HEK293 (cell line): ENCODE measurements at regions of chr1 and their contacts with region 1.

Region 1: GRCh38 chr1:156445789-156446263 is 54.7 kb downstream of the MEF2D start:
- H3K4me3 ChIP-seq: no peak overlapping the region
- H3K27ac ChIP-seq: no peak overlapping the region
- H3K4me1 ChIP-seq: no peaks in the 10 kb centered on the region
- CTCF ChIP-seq: peak; percentile 88

Region 2: DNA sequence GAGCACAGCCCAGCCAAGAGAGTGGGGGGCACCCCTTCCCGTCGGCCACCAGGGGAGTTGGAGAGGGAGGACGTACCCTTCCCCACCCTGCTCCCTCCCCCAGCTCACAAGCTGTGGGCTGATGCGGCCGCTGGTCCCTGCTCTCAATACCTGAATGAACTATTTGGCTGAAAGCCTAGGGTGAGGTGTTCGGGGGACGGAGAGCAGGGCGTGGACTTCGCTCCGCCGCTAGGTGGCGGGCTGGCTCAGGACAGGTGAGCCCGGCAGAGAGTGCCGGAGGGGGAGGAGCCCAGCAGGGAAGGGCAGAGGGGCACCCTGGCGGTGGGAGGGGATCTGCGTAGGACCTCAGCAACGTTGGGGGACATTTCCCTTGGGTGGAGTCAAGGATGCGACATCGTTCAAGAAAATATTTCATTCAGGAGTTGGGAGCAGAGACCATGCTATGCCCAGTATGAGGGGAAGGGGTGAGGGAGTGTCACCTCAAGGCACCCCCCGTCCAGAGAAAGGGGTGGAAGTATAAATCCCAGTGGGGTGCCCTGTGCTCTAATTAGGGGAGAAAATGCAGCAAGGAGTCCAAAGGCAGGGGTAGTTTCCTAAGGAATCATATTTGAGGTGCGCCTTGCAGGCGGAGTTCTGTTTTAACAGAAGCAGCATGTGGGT is 88.8 kb before region 1 on chr1:
- CTCF ChIA-PET with region 1: interaction called, 24 read pairs
- POLR2A ChIA-PET with region 1: no interaction called
- H3K4me3 ChIP-seq: no peak overlapping the region; the same call in 1 of the 2 replicates
- H3K27ac ChIP-seq: no peak overlapping the region
- H3K4me1 ChIP-seq: no peaks in the 10 kb centered on the region
- CTCF ChIP-seq: peak; percentile 98

Region 3: DNA sequence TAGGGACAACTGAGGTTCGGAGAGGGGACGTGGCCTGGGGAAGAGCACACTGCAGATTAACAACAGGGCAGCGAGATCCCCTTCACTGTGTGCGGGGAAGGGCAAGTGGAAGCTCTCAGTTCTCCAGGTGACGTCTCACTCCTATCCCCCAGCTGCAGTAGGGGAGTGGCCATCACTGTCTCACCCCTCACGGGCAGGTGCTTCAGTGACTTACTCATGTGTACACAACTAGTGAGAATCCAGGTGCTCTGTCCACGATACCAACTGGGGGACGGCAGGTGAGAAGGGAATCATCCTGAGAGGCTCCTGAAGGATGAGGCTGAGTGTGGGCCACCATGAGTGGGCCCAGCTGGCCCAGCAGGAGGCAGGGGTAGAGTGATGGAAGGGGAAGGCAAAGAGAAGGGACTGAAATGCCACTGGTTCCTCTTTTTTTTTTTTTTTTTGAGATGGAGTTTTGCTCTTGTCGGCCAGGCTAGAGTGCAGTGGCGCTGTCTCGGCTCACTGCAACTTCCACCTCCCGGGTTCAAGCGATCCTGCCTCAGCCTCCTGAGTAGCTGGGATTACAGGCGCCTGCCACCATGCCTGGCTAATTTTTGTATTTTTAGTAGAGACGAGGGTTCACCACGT is 50.9 kb before region 1 on chr1:
- CTCF ChIA-PET with region 1: interaction called, 439 read pairs
- POLR2A ChIA-PET with region 1: no interaction called
- H3K4me3 ChIP-seq: no peak overlapping the region
- H3K27ac ChIP-seq: no peak overlapping the region
- H3K4me1 ChIP-seq: no peaks in the 10 kb centered on the region
- CTCF ChIP-seq: no peak

Region 4: GRCh38 chr1:156429313-156430060 is 16.3 kb before region 1 on chr1:
- CTCF ChIA-PET with region 1: interaction called, 20 read pairs
- POLR2A ChIA-PET with region 1: no interaction called
- H3K4me3 ChIP-seq: no peak overlapping the region
- H3K27ac ChIP-seq: no peak overlapping the region
- H3K4me1 ChIP-seq: no peaks in the 10 kb centered on the region
- CTCF ChIP-seq: no peak

Region 5: GRCh38 chr1:156456622-156457465 is 11.0 kb after region 1 on chr1:
- CTCF ChIA-PET with region 1: interaction called, 40 read pairs
- POLR2A ChIA-PET with region 1: interaction called, 6 read pairs
- H3K4me3 ChIP-seq: peak overlapping the region; percentile 58
- H3K27ac ChIP-seq: peak overlapping the region; percentile 99
- H3K4me1 ChIP-seq: no peaks in the 10 kb centered on the region
- CTCF ChIP-seq: no peak

Region 6: GRCh38 chr1:156551866-156552265 is 106.0 kb after region 1 on chr1:
- CTCF ChIA-PET with region 1: no interaction called
- POLR2A ChIA-PET with region 1: no interaction called
- H3K4me3 ChIP-seq: no peak overlapping the region
- H3K27ac ChIP-seq: no peak overlapping the region
- H3K4me1 ChIP-seq: no peaks in the 10 kb centered on the region
- CTCF ChIP-seq: no peak